ENCODE measurements at regions of chr1 and their contacts with region 1.

Region 1: GRCh38 chr1:46527474-46528296 is 23.8 kb downstream of the KNCN start:
- DNase-seq: peak; percentile 88 to 96 (median 91)
- H3K4me3 ChIP-seq: no peak overlapping the region
- H3K27ac ChIP-seq: peak overlapping the region in 1 of 5 donors; percentile 31
- H3K4me1 ChIP-seq: peaks cover 3 to 8% of the 10 kb centered on the region in 2 donors
- H3K27me3 ChIP-seq: no peaks in the 10 kb centered on the region
- CTCF ChIP-seq: peak; percentile 73 to 98 (median 96)
- POLR2A ChIP-seq: no peak

Region 2: GRCh38 chr1:46406881-46407608 is 120.6 kb before region 1 on chr1:
- intact Hi-C with region 1: loop called (anchors 5 kb)
- DNase-seq: peak in 3 of 7 donors; percentile 29 to 50 (median 42)
- H3K4me3 ChIP-seq: peak overlapping the region in 1 of 4 donors; percentile 33
- H3K27ac ChIP-seq: peak overlapping the region in 2 of 5 donors; percentile 46 to 81
- H3K4me1 ChIP-seq: peaks cover 12 to 28% of the 10 kb centered on the region in 2 donors
- H3K27me3 ChIP-seq: no peaks in the 10 kb centered on the region
- CTCF ChIP-seq: no peak
- POLR2A ChIP-seq: no peak

Region 3: GRCh38 chr1:46448109-46448911 is 79.4 kb before region 1 on chr1:
- intact Hi-C with region 1: loop called in 1 of 2 experiments (anchors 2 kb)
- DNase-seq: no peak
- H3K4me3 ChIP-seq: peak overlapping the region in 1 of 4 donors; percentile 49
- H3K27ac ChIP-seq: no peak overlapping the region
- H3K4me1 ChIP-seq: no peaks in the 10 kb centered on the region
- H3K27me3 ChIP-seq: peaks cover 3% of the 10 kb centered on the region
- CTCF ChIP-seq: no peak
- POLR2A ChIP-seq: no peak

Region 4: GRCh38 chr1:46477153-46477929 is 50.3 kb before region 1 on chr1:
- intact Hi-C with region 1: loop called (anchors 2 kb)
- DNase-seq: peak; percentile 63 to 91 (median 79)
- H3K4me3 ChIP-seq: no peak overlapping the region
- H3K27ac ChIP-seq: no peak overlapping the region
- H3K4me1 ChIP-seq: no peaks in the 10 kb centered on the region
- H3K27me3 ChIP-seq: no peaks in the 10 kb centered on the region
- CTCF ChIP-seq: peak; percentile 82 to 91 (median 88)
- POLR2A ChIP-seq: no peak

Region 5: GRCh38 chr1:46724991-46725735 is 197.5 kb after region 1 on chr1:
- intact Hi-C with region 1: loop called in 1 of 2 experiments (anchors 5 kb)
- DNase-seq: peak; percentile 66 to 90 (median 78)
- H3K4me3 ChIP-seq: no peak overlapping the region
- H3K27ac ChIP-seq: no peak overlapping the region
- H3K4me1 ChIP-seq: peaks cover 0 to 4% of the 10 kb centered on the region in 2 donors
- H3K27me3 ChIP-seq: peaks cover 8% of the 10 kb centered on the region
- CTCF ChIP-seq: peak; percentile 70 to 92 (median 86)
- POLR2A ChIP-seq: no peak

Measured in adrenal gland (tissue), 19 donors.